Panc1 (cell line): ENCODE measurements at regions of chr14 and their contacts with region 1.

Region 1: GRCh38 chr14:30283826-30284446 is 275.0 kb upstream of the G2E3 start:
- DNase-seq: no peak
- ATAC-seq: 0 out of 2 replicates have a peak, but pooled peaks have one; percentile 53
- H3K4me3 ChIP-seq: no peak overlapping the region
- H3K27ac ChIP-seq: no peak overlapping the region
- H3K4me1 ChIP-seq: no peaks in the 10 kb centered on the region
- H3K27me3 ChIP-seq: no peaks in the 10 kb centered on the region
- CTCF ChIP-seq: peak; percentile 78

Region 2: GRCh38 chr14:29941401-29941800 is 342.5 kb before region 1 on chr14:
- CTCF ChIA-PET with region 1: no interaction called
- POLR2A ChIA-PET with region 1: no interaction called
- in situ Hi-C with region 1: no loop called
- intact Hi-C with region 1: no loop called
- DNase-seq: no peak
- ATAC-seq: no peak
- H3K4me3 ChIP-seq: no peak overlapping the region
- H3K27ac ChIP-seq: no peak overlapping the region
- H3K4me1 ChIP-seq: no peaks in the 10 kb centered on the region
- H3K27me3 ChIP-seq: no peaks in the 10 kb centered on the region
- CTCF ChIP-seq: no peak

Region 3: DNA sequence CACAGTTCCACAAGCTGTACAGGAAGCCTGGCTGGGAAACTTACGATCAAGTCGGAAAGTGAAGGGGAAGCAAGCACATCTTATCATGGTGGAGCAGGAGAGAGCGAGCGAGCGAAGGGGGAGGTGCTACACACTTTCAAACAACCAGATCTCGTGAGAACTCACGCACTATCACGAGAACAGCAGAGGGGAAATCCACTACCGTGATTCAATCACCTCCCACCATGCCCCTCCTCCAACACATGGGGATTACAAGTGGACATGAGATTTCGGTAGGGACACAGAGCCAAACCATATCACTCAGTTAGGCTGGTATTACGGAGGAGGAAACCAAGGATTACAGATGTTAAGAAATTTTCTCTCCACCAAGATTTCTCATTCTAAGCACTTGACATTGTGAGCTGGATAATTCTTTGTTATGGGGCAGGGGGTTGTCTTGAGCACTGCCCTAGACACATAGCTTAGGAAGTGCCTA is 13.0 kb after region 1 on chr14:
- CTCF ChIA-PET with region 1: interaction called, 12 read pairs
- POLR2A ChIA-PET with region 1: no interaction called
- in situ Hi-C with region 1: no loop called
- intact Hi-C with region 1: no loop called
- DNase-seq: no peak
- ATAC-seq: no peak
- H3K4me3 ChIP-seq: no peak overlapping the region
- H3K27ac ChIP-seq: no peak overlapping the region
- H3K4me1 ChIP-seq: no peaks in the 10 kb centered on the region
- H3K27me3 ChIP-seq: no peaks in the 10 kb centered on the region
- CTCF ChIP-seq: no peak